ENCODE measurements at regions of chrX and their contacts with region 1.

Region 1: GRCh38 chrX:132592880-132593279 is 104.0 kb upstream of the MBNL3 start:
- DNase-seq: peak; percentile 39
- ATAC-seq: peak; percentile 65
- H3K4me3 ChIP-seq: no peak overlapping the region
- H3K27ac ChIP-seq: no peak overlapping the region
- H3K4me1 ChIP-seq: peaks cover 79% of the 10 kb centered on the region
- H3K27me3 ChIP-seq: no peaks in the 10 kb centered on the region
- CTCF ChIP-seq: peak; percentile 65
- EP300 ChIP-seq: no peak
- POLR2A ChIP-seq: no peak
- RAD21 ChIP-seq: peak; percentile 37; the same call in 1 of the 2 replicates

Region 2: DNA sequence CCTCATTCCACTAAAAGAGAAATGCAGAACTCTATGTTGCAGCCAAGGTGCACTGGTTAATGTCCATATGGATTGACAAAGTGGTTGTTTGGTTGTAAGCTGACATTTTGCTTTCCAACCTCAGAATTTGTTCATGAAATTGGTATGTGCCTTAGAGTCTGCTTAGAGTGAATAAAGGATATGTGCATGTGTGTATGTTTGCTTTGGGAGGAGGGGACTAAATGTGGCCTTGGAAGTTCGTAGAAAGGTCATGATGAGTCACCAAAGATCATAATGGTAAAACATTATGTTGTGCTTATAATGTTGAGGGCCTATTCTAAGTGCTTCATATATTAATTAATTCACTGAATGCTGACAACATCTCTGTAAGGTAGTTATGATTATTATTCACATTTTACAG is 59.9 kb before region 1 on chrX:
- CTCF ChIA-PET with region 1: no interaction called
- POLR2A ChIA-PET with region 1: interaction called, 3 read pairs
- in situ Hi-C with region 1: no loop called
- intact Hi-C with region 1: loop called (anchors 1 kb)
- DNase-seq: peak; percentile 87
- ATAC-seq: peak; percentile 79
- H3K4me3 ChIP-seq: peak overlapping the region in 1 of 3 experiments; percentile 23; a peak in 1 of 6 replicates
- H3K27ac ChIP-seq: peak overlapping the region; percentile 58
- H3K4me1 ChIP-seq: peaks cover 37% of the 10 kb centered on the region
- H3K27me3 ChIP-seq: no peaks in the 10 kb centered on the region
- CTCF ChIP-seq: no peak
- EP300 ChIP-seq: peak in 1 of 2 experiments; percentile 76; a peak in 2 of 4 replicates
- POLR2A ChIP-seq: no peak
- RAD21 ChIP-seq: no peak

Region 3: GRCh38 chrX:132676561-132677186 is 83.8 kb after region 1 on chrX:
- CTCF ChIA-PET with region 1: no interaction called
- POLR2A ChIA-PET with region 1: no interaction called
- in situ Hi-C with region 1: no loop called
- intact Hi-C with region 1: no loop called
- DNase-seq: no peak
- ATAC-seq: no peak
- H3K4me3 ChIP-seq: no peak overlapping the region
- H3K27ac ChIP-seq: no peak overlapping the region
- H3K4me1 ChIP-seq: no peaks in the 10 kb centered on the region
- H3K27me3 ChIP-seq: no peaks in the 10 kb centered on the region
- CTCF ChIP-seq: peak; percentile 11; the same call in 1 of the 2 replicates
- EP300 ChIP-seq: no peak
- POLR2A ChIP-seq: no peak
- RAD21 ChIP-seq: no peak